Mammary epithelial cell (primary cell): ENCODE measurements at regions of chr10 and their contacts with region 1.

Region 1: DNA sequence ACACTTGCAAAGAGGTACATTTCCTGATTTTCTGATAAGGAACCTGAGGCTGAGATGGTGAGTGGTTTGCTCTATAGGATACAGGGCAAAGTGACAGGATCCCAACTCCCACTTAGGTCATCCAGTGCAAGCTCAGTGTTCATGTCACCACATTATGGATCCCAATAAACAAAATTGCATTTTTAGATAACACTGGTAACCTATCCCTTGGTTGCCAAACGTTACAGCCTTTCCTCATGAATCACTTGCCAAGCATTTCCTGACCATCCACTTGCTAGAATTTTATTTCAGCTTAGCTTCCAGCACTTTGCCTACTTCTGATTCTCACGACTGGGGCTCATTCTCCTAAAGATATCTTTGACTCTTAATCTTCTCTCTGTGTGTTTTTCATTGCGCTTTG is 131.4 kb upstream of the ODAD2 start:
- DNase-seq: peak; percentile 45
- H3K4me3 ChIP-seq: no peak overlapping the region
- H3K27ac ChIP-seq: no peak overlapping the region
- H3K4me1 ChIP-seq: peaks cover 6% of the 10 kb centered on the region
- H3K27me3 ChIP-seq: no peaks in the 10 kb centered on the region
- CTCF ChIP-seq: no peak

Region 2: GRCh38 chr10:27865221-27865638 is 265.0 kb before region 1 on chr10:
- CTCF ChIA-PET with region 1: no interaction called
- dilution Hi-C with region 1: no loop called
- in situ Hi-C with region 1: no loop called
- intact Hi-C with region 1: loop called (anchors 5 kb)
- DNase-seq: peak; percentile 89
- H3K4me3 ChIP-seq: no peak overlapping the region
- H3K27ac ChIP-seq: no peak overlapping the region
- H3K4me1 ChIP-seq: peaks cover 13% of the 10 kb centered on the region
- H3K27me3 ChIP-seq: no peaks in the 10 kb centered on the region
- CTCF ChIP-seq: peak in 1 of 2 donors; percentile 31

Region 3: DNA sequence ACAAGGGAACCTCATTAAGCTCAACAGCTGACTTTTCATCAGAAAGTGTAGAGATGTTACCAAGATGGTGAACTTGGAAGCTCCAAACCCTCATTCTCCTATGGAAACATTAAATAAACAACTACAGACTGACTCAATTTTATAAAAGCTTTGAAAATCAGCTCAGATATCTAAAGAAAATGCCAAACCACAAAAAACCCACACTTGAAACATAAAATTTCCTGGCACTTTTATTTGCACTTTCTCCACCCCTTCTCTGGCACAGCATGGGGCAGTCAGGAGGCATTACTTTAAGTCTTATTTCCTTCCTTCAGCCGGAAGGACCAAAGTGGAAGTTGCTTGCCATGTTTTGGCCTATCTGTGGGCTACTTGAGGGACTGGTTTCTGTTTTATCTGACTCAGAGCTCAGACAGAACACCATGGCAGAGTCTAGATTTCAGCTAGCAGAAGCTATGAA is 246.1 kb before region 1 on chr10:
- CTCF ChIA-PET with region 1: no interaction called
- dilution Hi-C with region 1: no loop called
- in situ Hi-C with region 1: no loop called
- intact Hi-C with region 1: no loop called
- DNase-seq: no peak
- H3K4me3 ChIP-seq: no peak overlapping the region
- H3K27ac ChIP-seq: no peak overlapping the region
- H3K4me1 ChIP-seq: no peaks in the 10 kb centered on the region
- H3K27me3 ChIP-seq: no peaks in the 10 kb centered on the region
- CTCF ChIP-seq: no peak

Region 4: GRCh38 chr10:28180654-28181053 is 50.4 kb after region 1 on chr10:
- CTCF ChIA-PET with region 1: no interaction called
- dilution Hi-C with region 1: no loop called
- in situ Hi-C with region 1: no loop called
- intact Hi-C with region 1: no loop called
- DNase-seq: peak; percentile 11
- H3K4me3 ChIP-seq: no peak overlapping the region
- H3K27ac ChIP-seq: no peak overlapping the region
- H3K4me1 ChIP-seq: peaks cover 5% of the 10 kb centered on the region
- H3K27me3 ChIP-seq: no peaks in the 10 kb centered on the region
- CTCF ChIP-seq: no peak

Region 5: GRCh38 chr10:28778524-28778923 is 648.3 kb after region 1 on chr10:
- CTCF ChIA-PET with region 1: no interaction called
- dilution Hi-C with region 1: no loop called
- in situ Hi-C with region 1: no loop called
- intact Hi-C with region 1: no loop called
- DNase-seq: no peak
- H3K4me3 ChIP-seq: no peak overlapping the region
- H3K27ac ChIP-seq: no peak overlapping the region
- H3K4me1 ChIP-seq: no peaks in the 10 kb centered on the region
- H3K27me3 ChIP-seq: no peaks in the 10 kb centered on the region
- CTCF ChIP-seq: no peak